MCF 10A (cell line): ENCODE measurements at regions of chr10 and their contacts with region 1.

Region 1: GRCh38 chr10:47024399-47025252 is 113.4 kb downstream of the PTPN20 start:
- DNase-seq: peak; percentile 67
- H3K4me3 Mint-ChIP-seq: no peak overlapping the region
- H3K27ac Mint-ChIP-seq: no peak overlapping the region
- H3K4me1 Mint-ChIP-seq: no peaks in the 10 kb centered on the region
- H3K27me3 Mint-ChIP-seq: no peaks in the 10 kb centered on the region
- CTCF ChIP-seq: peak; percentile 87

Region 2: GRCh38 chr10:46293832-46294640 is 730.6 kb before region 1 on chr10:
- CTCF ChIA-PET with region 1: no interaction called
- POLR2A ChIA-PET with region 1: no interaction called
- intact Hi-C with region 1: no loop called
- DNase-seq: peak; percentile 53
- H3K4me3 Mint-ChIP-seq: no peak overlapping the region
- H3K27ac Mint-ChIP-seq: no peak overlapping the region
- H3K4me1 Mint-ChIP-seq: no peaks in the 10 kb centered on the region
- H3K27me3 Mint-ChIP-seq: peaks cover 11% of the 10 kb centered on the region
- CTCF ChIP-seq: peak; percentile 22

Region 3: GRCh38 chr10:47047671-47048525 is 23.3 kb after region 1 on chr10:
- CTCF ChIA-PET with region 1: interaction called, 44 read pairs
- POLR2A ChIA-PET with region 1: no interaction called
- intact Hi-C with region 1: no loop called
- DNase-seq: peak; percentile 74
- H3K4me3 Mint-ChIP-seq: no peak overlapping the region
- H3K27ac Mint-ChIP-seq: peak overlapping the region; percentile 55
- H3K4me1 Mint-ChIP-seq: no peaks in the 10 kb centered on the region
- H3K27me3 Mint-ChIP-seq: peaks cover 12% of the 10 kb centered on the region
- CTCF ChIP-seq: peak; percentile 94

Region 4: GRCh38 chr10:47322300-47323061 is 297.9 kb after region 1 on chr10 and contains the start of gene GDF2:
- CTCF ChIA-PET with region 1: interaction called, 131 read pairs
- POLR2A ChIA-PET with region 1: no interaction called
- intact Hi-C with region 1: no loop called
- DNase-seq: no peak
- H3K4me3 Mint-ChIP-seq: no peak within 1 kb of the TSS
- H3K27ac Mint-ChIP-seq: no peak within 1 kb of the TSS
- H3K4me1 Mint-ChIP-seq: peaks cover 5% of the 10 kb centered on the region
- H3K27me3 Mint-ChIP-seq: peaks cover 36% of the 10 kb centered on the region
- CTCF ChIP-seq: no peak
- total RNA-seq, gene GDF2: not detected in 2 replicates

Region 5: GRCh38 chr10:47361293-47361692 is 336.7 kb after region 1 on chr10:
- CTCF ChIA-PET with region 1: interaction called, 11 read pairs
- POLR2A ChIA-PET with region 1: no interaction called
- intact Hi-C with region 1: no loop called
- DNase-seq: peak; percentile 60
- H3K4me3 Mint-ChIP-seq: no peak overlapping the region
- H3K27ac Mint-ChIP-seq: no peak overlapping the region
- H3K4me1 Mint-ChIP-seq: no peaks in the 10 kb centered on the region
- H3K27me3 Mint-ChIP-seq: no peaks in the 10 kb centered on the region
- CTCF ChIP-seq: peak; percentile 72